Activated naive CD4-positive, alpha-beta T cell treated with anti-CD3 and anti-CD28 coated beads for 36 hours (primary cell): ENCODE measurements at regions of chr6 and their contacts with region 1.

Region 1: GRCh38 chr6:41318654-41319565 is 16.5 kb upstream of the NCR2 start:
- DNase-seq: peak; percentile 92
- H3K4me3 Mint-ChIP-seq: peak overlapping the region; percentile 71
- H3K27ac Mint-ChIP-seq: peak overlapping the region; percentile 73
- H3K4me1 Mint-ChIP-seq: peaks cover 13% of the 10 kb centered on the region
- H3K27me3 Mint-ChIP-seq: peaks cover 8% of the 10 kb centered on the region

Region 2: DNA sequence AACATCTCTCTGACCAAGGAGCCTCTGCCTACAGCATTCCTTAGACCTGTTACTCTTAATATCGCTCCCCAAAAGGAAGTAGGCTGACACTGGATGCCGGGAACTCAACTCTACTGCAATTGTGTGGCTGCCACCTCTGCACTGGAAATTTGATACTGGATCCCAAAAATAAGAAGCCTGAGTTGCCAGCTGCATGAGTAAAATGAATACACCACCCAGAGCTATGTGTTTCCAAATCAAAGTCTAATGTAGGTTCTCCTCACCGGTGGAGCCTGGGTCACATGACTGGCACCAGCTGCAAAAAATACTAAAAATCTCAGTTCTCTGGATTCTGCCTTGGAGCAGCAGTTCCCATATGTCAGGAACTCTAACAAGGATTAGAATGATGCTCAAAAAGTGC is 316.7 kb before region 1 on chr6:
- CTCF ChIA-PET with region 1: no interaction called
- intact Hi-C with region 1: loop called (anchors 1 kb)
- DNase-seq: no peak
- H3K4me3 Mint-ChIP-seq: no peak overlapping the region
- H3K27ac Mint-ChIP-seq: no peak overlapping the region
- H3K4me1 Mint-ChIP-seq: no peaks in the 10 kb centered on the region
- H3K27me3 Mint-ChIP-seq: peaks cover 14% of the 10 kb centered on the region

Region 3: GRCh38 chr6:41092421-41093140 is 226.3 kb before region 1 on chr6:
- CTCF ChIA-PET with region 1: interaction called, 12 read pairs
- intact Hi-C with region 1: loop called (anchors 2 kb)
- DNase-seq: no peak
- H3K4me3 Mint-ChIP-seq: no peak overlapping the region
- H3K27ac Mint-ChIP-seq: no peak overlapping the region
- H3K4me1 Mint-ChIP-seq: no peaks in the 10 kb centered on the region
- H3K27me3 Mint-ChIP-seq: no peaks in the 10 kb centered on the region

Region 4: DNA sequence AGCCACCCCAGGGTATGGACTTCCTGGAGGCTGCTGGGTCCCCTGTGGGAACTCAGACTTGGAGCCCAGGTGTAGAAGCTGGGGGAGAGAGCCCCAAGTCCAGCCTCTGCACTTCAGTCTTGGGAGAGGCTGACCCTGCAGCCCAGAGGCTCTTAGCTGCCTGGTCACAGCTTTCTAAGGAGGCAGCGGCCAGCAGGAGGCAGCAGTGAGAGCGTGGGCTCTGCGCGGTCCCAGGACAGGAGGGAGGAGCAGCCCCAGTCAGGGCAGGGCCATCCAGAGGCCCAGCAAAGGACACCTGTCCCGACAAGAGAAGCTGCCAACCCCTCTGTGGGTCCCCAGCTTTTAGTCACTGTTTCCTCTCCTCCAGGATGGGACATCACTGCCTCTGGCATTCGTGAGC is 127.3 kb before region 1 on chr6:
- CTCF ChIA-PET with region 1: interaction called, 4 read pairs
- intact Hi-C with region 1: loop called (anchors 1 kb)
- DNase-seq: no peak
- H3K4me3 Mint-ChIP-seq: no peak overlapping the region
- H3K27ac Mint-ChIP-seq: no peak overlapping the region
- H3K4me1 Mint-ChIP-seq: peaks cover 37% of the 10 kb centered on the region
- H3K27me3 Mint-ChIP-seq: no peaks in the 10 kb centered on the region

Region 5: GRCh38 chr6:41306187-41306854 is 12.6 kb before region 1 on chr6:
- CTCF ChIA-PET with region 1: interaction called, 77 read pairs
- intact Hi-C with region 1: loop called (anchors 1 kb)
- DNase-seq: peak; percentile 73
- H3K4me3 Mint-ChIP-seq: no peak overlapping the region
- H3K27ac Mint-ChIP-seq: no peak overlapping the region
- H3K4me1 Mint-ChIP-seq: peaks cover 18% of the 10 kb centered on the region
- H3K27me3 Mint-ChIP-seq: no peaks in the 10 kb centered on the region